ENCODE measurements at regions of chr17 and their contacts with region 1.

Region 1: DNA sequence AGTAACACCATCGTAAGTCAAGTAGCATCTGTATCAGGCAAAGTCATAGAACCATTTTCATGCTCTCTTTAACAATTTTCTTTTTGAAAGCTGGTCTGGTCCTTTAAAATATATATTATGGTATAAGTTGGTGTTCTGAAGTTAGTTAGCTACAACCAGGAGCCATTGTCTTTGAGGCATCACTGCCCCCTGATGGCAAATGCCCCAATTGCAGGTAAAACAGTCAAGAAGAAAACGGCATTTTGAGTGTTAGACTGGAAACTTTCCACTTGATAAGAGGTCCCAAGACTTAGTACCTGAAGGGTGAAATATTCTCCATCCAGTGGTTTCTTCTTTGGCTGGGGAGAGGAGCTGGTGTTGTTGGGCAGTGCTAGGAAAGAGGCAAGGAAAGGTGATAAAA is 14.1 kb downstream of the TP53 start:
- DNase-seq: peak; percentile 66
- H3K4me3 Mint-ChIP-seq: no peak overlapping the region
- H3K27ac Mint-ChIP-seq: no peak overlapping the region
- H3K4me1 Mint-ChIP-seq: no peaks in the 10 kb centered on the region
- H3K27me3 Mint-ChIP-seq: no peaks in the 10 kb centered on the region

Region 2: GRCh38 chr17:7632492-7632894 is 40.7 kb before region 1 on chr17:
- CTCF ChIA-PET with region 1: interaction called, 11 read pairs
- DNase-seq: peak; percentile 58
- H3K4me3 Mint-ChIP-seq: no peak overlapping the region
- H3K27ac Mint-ChIP-seq: peak overlapping the region; percentile 17
- H3K4me1 Mint-ChIP-seq: peaks cover 9% of the 10 kb centered on the region
- H3K27me3 Mint-ChIP-seq: peaks cover 24% of the 10 kb centered on the region

Measured in activated naive CD4-positive, alpha-beta T cell treated with anti-CD3 and anti-CD28 coated beads, Interleukin-2, amount 10 ng/mL, durations not matched to agents 7 days and 5 days (primary cell).